ENCODE measurements at regions of chr2 and their contacts with region 1.

Region 1: GRCh38 chr2:60818272-60818671 is 62.2 kb downstream of the PAPOLG start:
- DNase-seq: no peak
- H3K4me3 ChIP-seq: no peak overlapping the region
- H3K27ac ChIP-seq: no peak overlapping the region
- H3K4me1 ChIP-seq: no peaks in the 10 kb centered on the region
- H3K27me3 ChIP-seq: no peaks in the 10 kb centered on the region
- CTCF ChIP-seq: peak; percentile 46

Region 2: DNA sequence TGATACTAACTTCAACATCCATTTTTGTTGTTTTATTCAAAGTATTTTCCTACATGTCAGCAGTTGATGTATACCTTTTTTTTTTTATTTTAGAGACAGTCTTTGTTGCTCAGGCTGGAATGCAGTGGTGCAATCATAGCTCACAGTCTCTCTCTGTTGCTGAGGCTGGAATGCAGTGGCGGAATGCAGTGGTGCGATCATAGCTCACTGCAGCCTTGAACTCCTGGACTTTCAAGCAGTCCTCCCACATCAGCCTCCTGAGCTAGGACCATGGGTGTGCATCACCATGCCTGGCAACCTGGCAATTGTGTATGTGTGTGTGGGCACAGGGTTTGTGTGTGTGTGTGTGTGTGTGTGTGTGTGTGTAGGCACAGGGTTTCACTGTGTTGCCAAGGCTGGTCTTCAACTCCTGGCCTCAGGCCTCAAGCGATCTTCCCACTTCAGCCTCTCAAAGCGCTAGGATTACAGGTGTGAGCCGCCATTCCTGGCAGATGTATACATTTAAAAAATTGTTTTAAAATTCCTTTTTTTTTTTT is 272.2 kb after region 1 on chr2:
- CTCF ChIA-PET with region 1: no interaction called
- POLR2A ChIA-PET with region 1: interaction called, 17 read pairs
- intact Hi-C with region 1: no loop called
- DNase-seq: no peak
- H3K4me3 ChIP-seq: no peak overlapping the region
- H3K27ac ChIP-seq: no peak overlapping the region
- H3K4me1 ChIP-seq: no peaks in the 10 kb centered on the region
- H3K27me3 ChIP-seq: no peaks in the 10 kb centered on the region
- CTCF ChIP-seq: no peak